ENCODE measurements at regions of chr11 and their contacts with region 1.

Region 1: DNA sequence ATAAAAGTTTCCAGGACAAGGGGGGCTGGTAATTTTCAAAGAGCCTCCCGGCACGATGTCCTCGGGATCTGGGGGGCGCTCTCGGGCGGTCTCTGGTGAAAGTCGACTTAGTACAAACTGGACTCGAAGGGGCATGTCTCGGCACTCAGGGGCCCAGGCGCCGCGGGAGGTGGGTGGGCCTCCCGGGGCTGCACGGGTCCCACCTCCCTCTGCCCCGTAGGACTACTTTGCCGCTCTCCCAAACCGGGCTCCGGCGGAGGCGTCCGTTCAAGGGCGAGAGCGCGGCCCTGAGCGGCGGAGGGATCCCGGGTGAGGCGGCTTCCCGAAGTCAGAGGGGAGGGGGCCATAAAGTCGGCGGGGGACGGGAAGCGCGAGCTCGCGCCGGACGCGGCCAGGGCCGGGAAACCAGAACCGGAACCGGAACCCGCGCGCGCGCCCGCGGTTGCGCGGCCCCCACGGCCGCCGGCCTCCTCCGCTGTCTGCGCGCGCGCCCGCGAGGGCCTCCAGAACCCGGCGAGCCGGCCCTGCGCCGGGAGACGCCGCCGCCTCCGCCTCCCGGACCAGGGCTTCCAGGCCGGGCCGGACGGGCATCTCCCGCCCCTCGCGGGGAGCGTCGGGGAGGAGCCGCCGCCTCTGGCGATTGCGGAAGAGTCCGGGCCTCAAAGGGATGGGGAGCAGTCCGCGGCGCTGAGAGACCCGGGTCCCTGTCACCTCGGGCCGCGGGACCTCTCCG is at the start of gene ARHGEF12:
- DNase-seq: peak; percentile 97 to 99 (median 98)
- ATAC-seq: peak; percentile 87 to 88
- H3K4me3 ChIP-seq: peak within 1 kb of the TSS; percentile 94
- H3K27ac ChIP-seq: peak within 1 kb of the TSS; percentile 99
- H3K4me1 ChIP-seq: no peaks in the 10 kb centered on the region
- H3K27me3 ChIP-seq: no peaks in the 10 kb centered on the region
- total RNA-seq, gene ARHGEF12: 93.1 to 112 (median 97.3) TPM

Region 2: GRCh38 chr11:120068114-120068573 is 267.9 kb before region 1 on chr11:
- intact Hi-C with region 1: no loop called
- DNase-seq: no peak
- ATAC-seq: no peak
- H3K4me3 ChIP-seq: no peak overlapping the region
- H3K27ac ChIP-seq: no peak overlapping the region
- H3K4me1 ChIP-seq: no peaks in the 10 kb centered on the region
- H3K27me3 ChIP-seq: no peaks in the 10 kb centered on the region

Region 3: DNA sequence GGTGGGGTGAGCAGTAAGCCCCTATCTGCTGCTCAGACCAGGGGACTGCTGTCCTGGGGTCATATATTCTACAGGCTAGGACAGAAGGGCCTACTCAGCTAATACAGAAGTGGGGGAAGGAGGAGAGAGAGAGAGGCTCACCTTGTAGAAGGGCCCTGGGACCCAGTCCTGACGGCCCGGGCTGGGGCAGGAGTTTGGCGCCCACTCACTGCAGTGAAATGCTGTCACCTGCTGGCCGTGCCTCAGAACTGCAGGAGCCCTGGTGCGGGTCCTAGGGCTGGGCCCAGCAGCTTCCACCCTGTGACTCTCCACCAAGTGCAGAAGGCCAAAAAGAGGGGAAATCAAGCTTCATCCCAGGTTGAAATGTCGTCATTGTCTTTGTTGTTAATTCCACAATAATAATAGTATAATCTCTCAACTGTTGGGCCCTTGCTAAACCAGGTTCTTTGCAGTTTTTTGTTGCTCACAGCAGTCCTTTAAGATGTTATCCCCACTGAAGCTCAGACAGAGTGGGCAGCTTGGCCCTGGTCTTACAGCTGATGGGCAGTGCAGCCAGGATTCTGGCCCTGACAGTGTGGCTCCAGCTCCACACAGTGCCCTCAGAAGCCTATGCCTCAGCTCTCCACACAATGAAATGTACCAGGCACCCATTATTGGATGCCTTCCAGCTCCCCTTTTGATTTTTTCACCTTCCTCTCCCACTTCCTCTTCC is 227.8 kb before region 1 on chr11:
- intact Hi-C with region 1: no loop called
- DNase-seq: peak; percentile 62 to 88 (median 84)
- ATAC-seq: peak; percentile 83 to 85
- H3K4me3 ChIP-seq: no peak overlapping the region
- H3K27ac ChIP-seq: no peak overlapping the region
- H3K4me1 ChIP-seq: no peaks in the 10 kb centered on the region
- H3K27me3 ChIP-seq: no peaks in the 10 kb centered on the region

Region 4: DNA sequence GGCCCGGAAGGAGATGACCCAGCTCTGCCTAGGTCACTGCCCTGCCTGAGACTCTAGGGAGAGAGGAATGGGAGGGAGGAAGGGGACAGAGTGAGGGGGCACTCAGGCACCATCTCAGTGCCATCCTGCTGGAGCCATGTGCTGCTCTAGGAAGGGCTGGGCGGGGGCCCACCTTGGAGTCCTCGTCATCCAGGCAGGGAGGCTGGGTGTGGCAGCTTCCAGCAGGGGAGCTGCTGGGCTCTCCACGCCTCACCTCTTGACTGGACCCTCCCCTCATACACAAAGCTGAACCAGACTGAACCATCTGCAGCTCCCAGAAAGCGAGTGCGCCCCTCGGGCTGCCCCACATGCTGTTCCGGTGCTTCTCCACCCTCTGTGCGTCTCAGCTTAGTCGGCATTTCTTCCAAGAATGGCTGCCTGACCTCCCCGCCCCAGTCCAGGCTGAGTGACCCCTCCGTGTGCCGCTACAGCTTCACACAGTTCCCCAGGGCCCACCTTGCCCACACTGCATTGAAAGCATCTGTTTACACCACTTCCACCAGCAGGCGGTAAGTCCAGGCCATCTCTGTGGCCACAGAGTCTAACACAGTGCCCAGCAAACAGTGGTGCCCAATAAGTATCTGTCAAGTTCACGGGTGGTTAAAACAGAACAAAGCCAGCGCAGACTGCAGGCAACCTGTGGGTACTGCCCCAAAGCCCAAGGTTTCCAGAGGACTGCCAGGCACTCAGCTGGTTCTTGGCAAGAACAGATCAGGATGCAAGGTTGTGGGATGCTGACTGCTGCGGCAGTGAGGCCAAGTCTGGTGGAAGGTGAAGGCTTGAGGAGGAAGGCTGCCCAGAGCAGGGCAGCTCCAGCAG is 188.8 kb before region 1 on chr11:
- intact Hi-C with region 1: no loop called
- DNase-seq: peak in 1 of 3 donors; percentile 18
- ATAC-seq: no peak
- H3K4me3 ChIP-seq: no peak overlapping the region
- H3K27ac ChIP-seq: no peak overlapping the region
- H3K4me1 ChIP-seq: no peaks in the 10 kb centered on the region
- H3K27me3 ChIP-seq: no peaks in the 10 kb centered on the region

Region 5: DNA sequence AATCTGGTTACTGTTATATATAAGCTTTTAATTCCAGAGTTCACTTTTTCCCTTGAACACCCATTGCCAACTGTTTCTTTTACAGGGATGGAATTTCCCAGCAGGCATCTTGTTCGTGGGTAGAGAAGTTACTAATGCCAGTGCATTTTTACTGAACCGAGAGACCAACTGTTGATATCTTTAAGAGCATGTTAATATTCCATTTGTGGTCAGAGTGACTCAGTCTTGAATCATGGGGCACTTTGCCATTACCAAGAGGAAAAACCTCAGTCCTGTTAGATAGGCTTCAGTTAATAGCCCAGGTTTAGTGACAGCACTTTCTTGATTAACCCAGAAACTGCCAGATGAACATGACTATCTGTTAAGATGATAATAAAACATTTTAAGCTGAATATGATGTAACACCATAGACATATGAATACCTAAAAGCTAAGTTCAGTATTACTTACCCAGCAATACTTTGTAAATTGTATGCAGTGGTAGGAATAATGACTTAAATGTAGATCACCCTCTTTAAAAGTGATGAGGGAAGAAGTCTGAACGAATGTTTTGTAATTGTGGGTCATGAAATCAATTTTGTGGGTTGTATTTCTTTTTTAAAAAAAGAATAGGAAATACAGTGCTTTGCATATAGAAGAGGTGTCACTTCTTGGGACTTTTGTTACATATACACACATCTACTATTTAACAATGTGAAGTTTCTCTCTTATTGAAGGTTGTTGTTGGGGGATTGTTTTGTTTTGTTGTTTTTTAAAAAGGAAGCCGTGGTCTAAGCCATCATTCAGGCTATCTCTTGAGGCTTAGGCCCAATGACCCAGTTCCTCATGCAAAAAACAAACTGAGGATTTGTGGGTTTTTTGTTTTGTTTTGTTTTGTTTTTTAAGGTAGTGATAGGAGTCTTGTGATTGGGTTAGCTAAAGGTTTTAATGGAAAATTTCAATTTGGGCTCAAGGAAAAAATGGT is 96.3 kb after region 1 on chr11:
- intact Hi-C with region 1: loop called in 3 of 4 experiments (anchors 5 to 10 kb)
- DNase-seq: no peak
- ATAC-seq: peak; percentile 93 to 95
- H3K4me3 ChIP-seq: no peak overlapping the region
- H3K27ac ChIP-seq: peak overlapping the region; percentile 52
- H3K4me1 ChIP-seq: no peaks in the 10 kb centered on the region
- H3K27me3 ChIP-seq: no peaks in the 10 kb centered on the region

Region 6: DNA sequence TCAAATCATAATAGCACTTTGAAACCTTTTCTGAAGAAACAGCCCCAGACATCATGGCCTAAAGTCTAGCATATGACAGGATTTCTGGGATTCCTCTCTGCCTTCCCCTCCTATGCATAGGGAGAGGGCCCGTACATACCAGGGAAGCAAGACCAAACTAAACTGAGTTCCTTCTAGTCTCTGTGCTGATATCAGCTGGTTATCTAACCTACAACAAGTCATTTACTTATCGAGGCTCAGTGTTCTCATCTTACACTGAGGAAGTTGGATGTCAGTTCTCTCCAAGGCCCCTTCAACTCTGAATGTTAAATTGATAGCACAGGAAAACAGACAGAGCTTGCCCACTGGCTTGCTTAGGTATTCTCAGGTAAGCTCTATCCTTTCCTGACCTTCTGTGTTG is 158.5 kb after region 1 on chr11:
- intact Hi-C with region 1: loop called in 1 of 4 experiments (anchors 10 kb)
- DNase-seq: no peak
- ATAC-seq: no peak
- H3K4me3 ChIP-seq: no peak overlapping the region
- H3K27ac ChIP-seq: no peak overlapping the region
- H3K4me1 ChIP-seq: no peaks in the 10 kb centered on the region
- H3K27me3 ChIP-seq: no peaks in the 10 kb centered on the region

Region 7: GRCh38 chr11:121964591-121964990 is 1628.5 kb after region 1 on chr11:
- intact Hi-C with region 1: no loop called
- DNase-seq: no peak
- ATAC-seq: no peak
- H3K4me3 ChIP-seq: no peak overlapping the region
- H3K27ac ChIP-seq: no peak overlapping the region
- H3K4me1 ChIP-seq: peaks cover 4% of the 10 kb centered on the region
- H3K27me3 ChIP-seq: no peaks in the 10 kb centered on the region

Measured in right cardiac atrium (tissue), 5 donors.